Mammary epithelial cell (primary cell): ENCODE measurements at regions of chr4 and their contacts with region 1.

Region 1: DNA sequence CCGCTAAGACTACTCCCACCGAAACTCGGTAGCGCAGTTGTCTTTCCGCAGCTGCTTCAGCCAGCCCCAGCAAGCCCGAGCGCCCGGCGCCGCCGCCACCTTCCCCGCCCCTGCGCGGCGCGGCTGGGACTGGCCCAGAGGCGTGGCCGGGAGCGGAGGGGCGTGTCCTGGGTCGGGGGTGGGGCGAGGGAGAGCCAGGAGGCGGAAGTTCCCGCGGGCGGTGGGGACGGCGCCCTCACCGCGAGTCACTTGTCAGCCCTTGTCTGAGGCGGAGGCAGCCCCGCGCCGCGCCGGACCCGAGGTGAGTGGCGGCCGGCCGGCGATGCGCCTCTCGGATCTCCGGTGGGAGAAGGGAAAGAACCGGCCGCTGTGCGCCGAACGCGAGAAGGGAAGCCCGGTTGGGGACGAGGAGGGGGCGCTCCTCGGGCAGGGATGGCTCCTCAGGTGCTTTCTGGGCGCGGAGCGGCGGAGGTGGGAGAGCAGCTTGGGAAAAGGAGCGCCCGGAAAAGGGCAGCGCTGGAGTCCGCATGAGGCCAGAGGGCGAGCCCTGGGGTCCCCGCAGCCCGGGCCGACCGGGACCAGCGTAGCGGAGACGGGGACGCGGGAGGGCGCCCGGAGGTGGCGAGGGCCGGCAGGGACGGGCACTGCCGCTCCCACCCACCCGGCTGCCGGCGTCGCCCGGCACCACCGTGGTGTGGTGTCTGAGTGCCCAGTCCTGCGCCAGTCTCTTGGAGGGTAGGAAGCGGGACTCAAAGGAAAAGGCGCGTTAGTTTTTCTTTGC is at the start of gene PDLIM5:
- DNase-seq: peak; percentile 96
- H3K4me3 ChIP-seq: peak within 1 kb of the TSS; percentile 70 to 99 (median 74)
- H3K27ac ChIP-seq: peak within 1 kb of the TSS; percentile 89
- H3K4me1 ChIP-seq: peaks cover 43% of the 10 kb centered on the region
- H3K27me3 ChIP-seq: no peaks in the 10 kb centered on the region
- CTCF ChIP-seq: peak in 1 of 2 donors; percentile 2
- total RNA-seq, gene PDLIM5: 199 to 225 TPM

Region 2: GRCh38 chr4:94036964-94037363 is 414.9 kb before region 1 on chr4:
- CTCF ChIA-PET with region 1: no interaction called
- dilution Hi-C with region 1: no loop called
- in situ Hi-C with region 1: no loop called
- intact Hi-C with region 1: no loop called
- DNase-seq: no peak
- H3K4me3 ChIP-seq: no peak overlapping the region
- H3K27ac ChIP-seq: no peak overlapping the region
- H3K4me1 ChIP-seq: no peaks in the 10 kb centered on the region
- H3K27me3 ChIP-seq: no peaks in the 10 kb centered on the region
- CTCF ChIP-seq: no peak

Region 3: DNA sequence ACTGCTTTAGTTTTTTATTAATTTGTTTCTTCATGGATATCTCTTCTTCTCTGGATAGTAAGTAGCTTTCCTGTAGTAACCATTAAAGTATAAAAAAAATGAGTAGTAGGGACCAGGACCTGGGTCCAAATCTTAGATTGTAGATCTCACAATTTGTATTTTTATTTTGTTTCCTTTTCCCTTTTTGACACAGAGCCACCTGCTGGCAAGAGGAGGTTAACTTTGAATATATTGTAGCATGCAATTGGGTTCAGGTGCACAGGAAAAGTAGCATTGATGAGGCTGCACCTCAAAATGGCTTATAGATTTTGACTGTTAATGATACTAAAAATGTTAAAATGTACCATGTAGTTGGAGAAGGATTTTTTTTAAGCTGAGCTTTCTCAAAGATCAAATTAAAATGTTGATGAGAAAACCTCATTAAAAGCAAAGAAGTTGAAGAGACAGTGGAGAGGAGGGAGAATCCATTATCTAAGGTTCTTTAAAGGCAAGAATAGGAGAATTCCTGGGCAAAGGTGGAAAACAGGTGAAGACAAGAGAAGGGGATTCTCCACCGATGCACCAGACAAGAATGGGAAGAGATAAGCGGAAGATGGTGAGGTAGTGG is 61.0 kb before region 1 on chr4:
- CTCF ChIA-PET with region 1: no interaction called
- dilution Hi-C with region 1: no loop called
- in situ Hi-C with region 1: no loop called
- intact Hi-C with region 1: no loop called
- DNase-seq: no peak
- H3K4me3 ChIP-seq: no peak overlapping the region
- H3K27ac ChIP-seq: no peak overlapping the region
- H3K4me1 ChIP-seq: no peaks in the 10 kb centered on the region
- H3K27me3 ChIP-seq: no peaks in the 10 kb centered on the region
- CTCF ChIP-seq: peak; percentile 51 to 67

Region 4: GRCh38 chr4:94406668-94407437 is 45.0 kb before region 1 on chr4:
- CTCF ChIA-PET with region 1: no interaction called
- dilution Hi-C with region 1: no loop called
- in situ Hi-C with region 1: no loop called
- intact Hi-C with region 1: loop called (anchors 1 kb)
- DNase-seq: peak; percentile 59
- H3K4me3 ChIP-seq: no peak overlapping the region
- H3K27ac ChIP-seq: no peak overlapping the region
- H3K4me1 ChIP-seq: no peaks in the 10 kb centered on the region
- H3K27me3 ChIP-seq: no peaks in the 10 kb centered on the region
- CTCF ChIP-seq: peak; percentile 85 to 91

Region 5: DNA sequence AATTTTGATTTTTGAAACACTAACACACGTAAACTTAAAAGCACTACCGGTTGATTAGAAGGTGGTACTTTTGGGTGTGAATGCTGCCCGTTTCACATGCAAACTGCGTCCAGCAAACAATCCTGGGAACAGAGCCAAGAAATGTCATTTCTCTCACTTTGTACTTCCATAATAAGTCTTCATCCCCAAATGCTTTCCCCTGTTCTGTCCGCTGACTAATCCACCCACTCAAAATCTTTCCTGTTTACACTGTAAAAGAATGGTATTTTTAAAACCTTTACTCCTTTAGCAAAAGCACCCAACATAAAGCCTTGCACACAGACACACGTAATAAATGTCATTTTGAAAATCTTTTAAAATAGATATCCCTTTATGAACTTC is 39.2 kb before region 1 on chr4:
- CTCF ChIA-PET with region 1: no interaction called
- dilution Hi-C with region 1: no loop called
- in situ Hi-C with region 1: no loop called
- intact Hi-C with region 1: loop called (anchors 2 kb)
- DNase-seq: peak; percentile 64
- H3K4me3 ChIP-seq: no peak overlapping the region
- H3K27ac ChIP-seq: no peak overlapping the region
- H3K4me1 ChIP-seq: peaks cover 12% of the 10 kb centered on the region
- H3K27me3 ChIP-seq: no peaks in the 10 kb centered on the region
- CTCF ChIP-seq: no peak

Region 6: GRCh38 chr4:94488662-94489061 is 36.8 kb after region 1 on chr4:
- CTCF ChIA-PET with region 1: no interaction called
- dilution Hi-C with region 1: loop called (anchors 5 kb)
- in situ Hi-C with region 1: no loop called
- intact Hi-C with region 1: loop called (anchors 2 kb)
- DNase-seq: peak; percentile 95
- H3K4me3 ChIP-seq: peak overlapping the region; percentile 21 to 35 (median 26)
- H3K27ac ChIP-seq: peak overlapping the region; percentile 85
- H3K4me1 ChIP-seq: peaks cover 66% of the 10 kb centered on the region
- H3K27me3 ChIP-seq: no peaks in the 10 kb centered on the region
- CTCF ChIP-seq: no peak

Region 7: DNA sequence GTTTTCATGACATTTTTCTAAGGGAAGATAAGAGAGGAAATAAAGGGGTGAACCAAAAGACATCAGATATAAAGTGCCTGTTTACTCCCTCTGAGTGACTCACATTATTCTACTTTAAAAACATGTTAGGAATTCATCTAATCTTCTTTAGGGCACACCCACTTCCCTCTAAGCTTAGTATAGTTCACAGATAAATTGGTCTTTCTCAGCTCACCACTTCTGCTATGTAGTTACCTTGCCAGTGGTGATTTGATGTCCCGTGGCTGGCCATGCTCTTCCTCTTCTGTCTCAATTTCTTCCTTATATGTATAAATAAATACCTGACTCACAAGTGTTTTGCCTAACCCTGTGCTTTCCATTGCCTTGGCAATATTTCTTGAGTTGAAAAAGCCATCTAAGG is 96.7 kb after region 1 on chr4:
- CTCF ChIA-PET with region 1: no interaction called
- dilution Hi-C with region 1: no loop called
- in situ Hi-C with region 1: no loop called
- intact Hi-C with region 1: loop called (anchors 1 kb)
- DNase-seq: peak; percentile 90
- H3K4me3 ChIP-seq: no peak overlapping the region
- H3K27ac ChIP-seq: peak overlapping the region; percentile 80
- H3K4me1 ChIP-seq: peaks cover 46% of the 10 kb centered on the region
- H3K27me3 ChIP-seq: no peaks in the 10 kb centered on the region
- CTCF ChIP-seq: no peak

Region 8: GRCh38 chr4:94561249-94562024 is 109.6 kb after region 1 on chr4:
- CTCF ChIA-PET with region 1: no interaction called
- dilution Hi-C with region 1: loop called (anchors 10 kb)
- in situ Hi-C with region 1: no loop called
- intact Hi-C with region 1: no loop called
- DNase-seq: peak; percentile 71
- H3K4me3 ChIP-seq: no peak overlapping the region
- H3K27ac ChIP-seq: no peak overlapping the region
- H3K4me1 ChIP-seq: peaks cover 28% of the 10 kb centered on the region
- H3K27me3 ChIP-seq: no peaks in the 10 kb centered on the region
- CTCF ChIP-seq: no peak

Region 9: GRCh38 chr4:94595879-94596483 is 144.1 kb after region 1 on chr4:
- CTCF ChIA-PET with region 1: no interaction called
- dilution Hi-C with region 1: no loop called
- in situ Hi-C with region 1: no loop called
- intact Hi-C with region 1: loop called (anchors 1 kb)
- DNase-seq: peak; percentile 34
- H3K4me3 ChIP-seq: no peak overlapping the region
- H3K27ac ChIP-seq: no peak overlapping the region
- H3K4me1 ChIP-seq: no peaks in the 10 kb centered on the region
- H3K27me3 ChIP-seq: no peaks in the 10 kb centered on the region
- CTCF ChIP-seq: peak; percentile 44 to 56

Region 10: GRCh38 chr4:95317085-95317793 is 865.4 kb after region 1 on chr4:
- CTCF ChIA-PET with region 1: no interaction called
- dilution Hi-C with region 1: no loop called
- in situ Hi-C with region 1: no loop called
- intact Hi-C with region 1: no loop called
- DNase-seq: no peak
- H3K4me3 ChIP-seq: no peak overlapping the region
- H3K27ac ChIP-seq: no peak overlapping the region
- H3K4me1 ChIP-seq: peaks cover 5% of the 10 kb centered on the region
- H3K27me3 ChIP-seq: no peaks in the 10 kb centered on the region
- CTCF ChIP-seq: no peak